ENCODE measurements at regions of chr13 and their contacts with region 1.

Region 1: DNA sequence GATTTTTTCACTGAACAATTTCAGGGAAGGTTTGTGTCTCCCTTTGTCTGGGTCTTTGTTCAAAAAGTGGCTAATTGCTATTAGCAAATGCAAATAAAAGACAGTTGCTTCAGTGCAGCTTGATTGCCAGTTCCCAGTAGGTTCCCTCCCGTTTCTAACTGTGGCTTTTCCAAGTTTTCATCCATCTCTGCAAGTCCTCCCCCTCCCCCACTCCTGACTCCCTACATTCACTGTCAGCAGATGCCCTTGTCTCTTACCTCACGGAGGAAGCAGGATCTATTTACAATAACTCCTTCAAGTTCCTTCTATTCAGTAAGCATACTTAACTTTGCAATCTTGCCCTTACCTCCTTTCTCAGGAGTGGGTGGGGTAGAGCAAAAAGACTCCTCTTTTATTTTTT is 55.4 kb upstream of the SCEL start:
- DNase-seq: no peak
- ATAC-seq: peak; percentile 22; the same call in 1 of the 2 replicates
- H3K4me3 Mint-ChIP-seq: peak overlapping the region; percentile 6; the same call in 1 of the 2 replicates
- H3K27ac Mint-ChIP-seq: no peak overlapping the region; the same call in 1 of the 2 replicates
- H3K4me1 Mint-ChIP-seq: peaks cover 35% of the 10 kb centered on the region
- H3K27me3 Mint-ChIP-seq: no peaks in the 10 kb centered on the region
- CTCF ChIP-seq: no peak

Region 2: DNA sequence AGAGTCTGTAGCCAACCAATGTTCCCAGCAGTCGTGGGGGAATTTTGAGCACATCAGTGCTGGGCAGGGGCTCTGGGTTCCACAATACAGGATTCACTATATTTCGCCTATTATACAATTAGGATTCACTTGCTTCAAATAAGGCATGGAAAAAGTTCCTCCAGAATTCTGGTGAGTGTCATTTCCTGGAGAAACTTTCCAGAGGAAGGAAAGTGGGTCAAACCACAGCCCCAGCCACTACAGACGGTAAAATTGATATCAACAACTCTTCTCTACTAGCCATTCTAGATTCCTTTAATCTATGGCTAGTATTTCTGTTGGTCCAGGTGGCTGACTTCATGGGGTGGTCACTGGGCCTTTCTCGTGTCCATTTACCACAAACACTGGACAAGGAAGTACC is 163.6 kb before region 1 on chr13:
- CTCF ChIA-PET with region 1: interaction called, 20 read pairs
- POLR2A ChIA-PET with region 1: interaction called, 4 read pairs
- DNase-seq: no peak
- ATAC-seq: no peak
- H3K4me3 Mint-ChIP-seq: no peak overlapping the region
- H3K27ac Mint-ChIP-seq: no peak overlapping the region
- H3K4me1 Mint-ChIP-seq: peaks cover 52% of the 10 kb centered on the region
- H3K27me3 Mint-ChIP-seq: no peaks in the 10 kb centered on the region
- CTCF ChIP-seq: no peak

Region 3: GRCh38 chr13:77397636-77398035 is 82.4 kb before region 1 on chr13:
- CTCF ChIA-PET with region 1: no interaction called
- POLR2A ChIA-PET with region 1: no interaction called
- DNase-seq: no peak
- ATAC-seq: no peak
- H3K4me3 Mint-ChIP-seq: no peak overlapping the region
- H3K27ac Mint-ChIP-seq: no peak overlapping the region
- H3K4me1 Mint-ChIP-seq: no peaks in the 10 kb centered on the region
- H3K27me3 Mint-ChIP-seq: no peaks in the 10 kb centered on the region
- CTCF ChIP-seq: no peak